CD8-positive, alpha-beta T cell (primary cell): ENCODE measurements at regions of chr10 and their contacts with region 1.

Region 1: GRCh38 chr10:29646238-29646902 is 11.6 kb upstream of the SVIL start:
- DNase-seq: no peak
- ATAC-seq: no peak
- H3K4me3 ChIP-seq: no peak overlapping the region
- H3K4me3 Mint-ChIP-seq: no peak overlapping the region
- H3K27ac ChIP-seq: no peak overlapping the region
- H3K27ac Mint-ChIP-seq: peak overlapping the region; percentile 32
- H3K4me1 ChIP-seq: peaks cover 34% of the 10 kb centered on the region
- H3K4me1 Mint-ChIP-seq: peaks cover 41% of the 10 kb centered on the region
- H3K27me3 ChIP-seq: no peaks in the 10 kb centered on the region
- H3K27me3 Mint-ChIP-seq: no peaks in the 10 kb centered on the region
- CTCF ChIP-seq: no peak

Region 2: GRCh38 chr10:29540016-29540415 is 106.4 kb before region 1 on chr10:
- CTCF ChIA-PET with region 1: no interaction called
- POLR2A ChIA-PET with region 1: no interaction called
- intact Hi-C with region 1: no loop called
- DNase-seq: no peak
- ATAC-seq: no peak
- H3K4me3 ChIP-seq: no peak overlapping the region
- H3K4me3 Mint-ChIP-seq: no peak overlapping the region
- H3K27ac ChIP-seq: no peak overlapping the region
- H3K27ac Mint-ChIP-seq: no peak overlapping the region
- H3K4me1 ChIP-seq: no peaks in the 10 kb centered on the region
- H3K4me1 Mint-ChIP-seq: no peaks in the 10 kb centered on the region
- H3K27me3 ChIP-seq: no peaks in the 10 kb centered on the region
- H3K27me3 Mint-ChIP-seq: no peaks in the 10 kb centered on the region
- CTCF ChIP-seq: no peak

Region 3: GRCh38 chr10:29588629-29589421 is 57.5 kb before region 1 on chr10:
- CTCF ChIA-PET with region 1: interaction called, 3 read pairs
- POLR2A ChIA-PET with region 1: no interaction called
- intact Hi-C with region 1: loop called in 1 of 2 experiments (anchors 1 kb)
- DNase-seq: no peak
- ATAC-seq: no peak
- H3K4me3 ChIP-seq: no peak overlapping the region
- H3K4me3 Mint-ChIP-seq: no peak overlapping the region
- H3K27ac ChIP-seq: no peak overlapping the region
- H3K27ac Mint-ChIP-seq: no peak overlapping the region
- H3K4me1 ChIP-seq: peaks cover 6% of the 10 kb centered on the region
- H3K4me1 Mint-ChIP-seq: peaks cover 11% of the 10 kb centered on the region
- H3K27me3 ChIP-seq: no peaks in the 10 kb centered on the region
- H3K27me3 Mint-ChIP-seq: no peaks in the 10 kb centered on the region
- CTCF ChIP-seq: no peak

Region 4: DNA sequence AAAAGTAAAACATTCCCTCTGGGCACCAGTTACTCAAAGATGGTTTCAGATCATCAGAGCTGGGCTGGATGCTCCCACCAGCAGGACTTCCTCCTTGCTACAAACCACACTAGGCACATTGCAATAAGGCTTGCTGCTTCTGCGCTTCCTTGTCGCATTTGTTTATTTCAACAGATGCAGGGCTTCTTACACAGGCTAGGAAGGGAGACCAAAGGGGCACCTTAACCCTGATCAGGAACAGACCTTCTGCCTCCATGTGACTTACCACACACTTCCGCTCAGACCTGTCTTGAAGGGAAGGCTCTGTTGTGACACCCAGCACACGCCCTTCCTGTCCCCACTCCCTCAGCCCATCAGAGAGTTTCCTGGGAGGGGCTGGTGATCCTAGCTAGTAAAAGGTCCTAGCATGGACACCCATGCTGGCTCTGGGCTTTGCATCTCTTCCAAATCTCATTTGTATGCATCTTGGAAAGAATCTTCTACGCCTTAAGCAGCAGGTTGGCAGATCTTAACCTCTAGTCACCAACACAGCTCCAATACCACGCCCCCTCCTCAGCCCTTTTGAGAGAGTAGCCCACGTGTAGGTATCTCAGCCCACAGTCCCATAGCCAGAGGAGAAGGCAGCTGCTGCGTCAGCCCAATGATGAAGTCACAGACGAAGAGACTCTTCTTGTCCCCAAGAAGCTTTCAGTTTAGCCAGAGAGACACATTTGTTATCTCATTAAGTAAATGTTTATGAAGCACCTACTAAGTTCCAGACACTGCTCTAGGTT is 35.5 kb after region 1 on chr10:
- CTCF ChIA-PET with region 1: interaction called, 3 read pairs
- POLR2A ChIA-PET with region 1: interaction called, 4 read pairs
- intact Hi-C with region 1: loop called in 1 of 2 experiments (anchors 5 kb)
- DNase-seq: peak; percentile 15 to 90 (median 67)
- ATAC-seq: peak; percentile 95
- H3K4me3 ChIP-seq: peak overlapping the region; percentile 14 to 25
- H3K4me3 Mint-ChIP-seq: peak overlapping the region; percentile 74
- H3K27ac ChIP-seq: peak overlapping the region; percentile 42 to 81
- H3K27ac Mint-ChIP-seq: peak overlapping the region; percentile 92
- H3K4me1 ChIP-seq: peaks cover 66% of the 10 kb centered on the region
- H3K4me1 Mint-ChIP-seq: peaks cover 88% of the 10 kb centered on the region
- H3K27me3 ChIP-seq: no peaks in the 10 kb centered on the region
- H3K27me3 Mint-ChIP-seq: no peaks in the 10 kb centered on the region
- CTCF ChIP-seq: no peak